HEK293T (cell line): ENCODE measurements at regions of chr20 and their contacts with region 1.

Region 1: GRCh38 chr20:37290158-37290810 is 829 bp downstream of the MANBAL start:
- DNase-seq: no peak

Region 2: GRCh38 chr20:36541227-36541763 is 749.0 kb before region 1 on chr20 and contains the start of gene MYL9:
- CTCF ChIA-PET with region 1: no interaction called
- POLR2A ChIA-PET with region 1: no interaction called
- DNase-seq: no peak

Region 3: DNA sequence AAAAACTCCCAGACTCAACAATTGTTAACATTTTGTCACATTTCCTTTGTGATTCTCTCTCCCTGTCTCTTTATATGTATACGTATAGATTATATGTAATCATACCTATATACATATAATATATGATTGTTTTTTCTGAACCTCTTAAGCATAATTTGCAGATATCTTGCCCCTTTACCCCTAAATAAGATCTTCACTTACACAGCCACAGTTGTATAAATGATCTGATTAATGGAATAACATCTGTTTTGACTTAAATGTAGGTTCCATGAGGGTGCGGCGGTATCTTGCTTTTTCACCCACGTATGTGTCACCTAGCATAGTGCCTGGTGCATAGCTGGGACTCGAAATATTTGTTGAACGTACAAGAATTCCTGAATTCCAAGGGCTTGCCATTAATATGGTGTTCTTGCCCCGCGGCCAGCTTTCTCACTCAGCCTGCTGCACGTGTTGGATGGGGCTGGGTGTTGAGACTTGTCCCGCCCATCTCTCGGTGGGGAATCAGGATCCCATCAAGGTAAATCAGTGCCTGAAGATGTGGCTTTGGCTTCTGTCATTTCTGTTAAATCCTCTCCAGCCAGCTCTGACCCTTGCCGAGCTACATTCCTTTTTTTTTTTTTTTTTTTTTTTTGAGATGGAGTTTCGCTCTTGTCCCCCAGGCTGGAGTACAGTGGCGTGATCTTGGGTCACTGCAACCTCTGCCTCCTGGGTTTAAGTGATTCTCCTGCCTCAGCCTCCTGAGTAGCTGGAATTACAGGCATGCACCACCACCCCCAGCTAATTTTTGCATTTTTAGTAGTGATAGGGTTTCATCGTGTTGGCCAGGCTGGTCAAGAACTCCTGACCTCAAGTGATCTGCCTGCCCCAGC is 11.1 kb before region 1 on chr20:
- CTCF ChIA-PET with region 1: interaction called, 3 read pairs
- POLR2A ChIA-PET with region 1: interaction called, 13 read pairs
- DNase-seq: no peak

Region 4: DNA sequence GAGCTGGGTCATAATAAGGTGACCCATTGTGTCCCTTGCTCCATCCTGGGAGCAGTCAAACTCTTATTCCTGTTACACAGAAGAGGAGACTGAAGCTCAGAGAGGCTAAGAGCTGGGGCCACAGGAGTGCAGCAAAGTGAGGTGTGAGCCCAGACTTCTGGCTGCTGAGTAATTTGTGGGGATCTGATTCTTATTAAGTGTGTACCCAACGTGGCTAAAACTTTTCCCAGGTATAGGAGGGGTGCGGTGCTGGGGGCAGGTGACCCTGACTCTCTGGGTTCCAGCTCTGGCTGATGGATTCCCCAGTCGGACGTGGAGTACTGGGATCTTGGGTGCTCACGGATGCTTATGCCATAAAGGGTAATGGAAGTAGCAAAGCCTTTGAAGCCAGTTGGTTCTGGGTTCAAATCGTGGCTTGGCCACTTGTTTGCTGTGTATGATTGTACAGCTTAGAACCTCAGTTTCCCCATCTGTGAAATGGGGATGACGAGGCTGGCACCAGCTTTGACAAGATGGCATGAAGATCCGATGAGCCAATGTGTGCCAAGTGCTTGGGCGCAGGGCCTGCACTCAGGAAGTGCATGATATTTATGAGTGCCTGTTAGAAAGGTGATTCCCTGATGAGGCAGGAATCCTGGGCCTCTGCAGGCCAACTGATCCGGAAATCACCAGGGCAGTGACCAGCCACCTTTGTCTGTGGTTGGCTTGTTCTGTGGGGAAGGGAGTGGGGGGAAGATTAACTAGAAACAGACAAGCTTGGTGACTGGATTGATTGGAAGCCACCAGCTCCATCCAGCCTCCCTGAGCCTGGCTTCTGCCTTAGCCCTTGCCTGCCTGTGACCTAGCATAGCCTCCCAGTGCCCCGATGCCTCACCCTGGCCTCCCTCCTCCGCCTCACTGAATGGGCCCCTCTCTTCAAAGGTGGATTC is 61.7 kb after region 1 on chr20:
- CTCF ChIA-PET with region 1: no interaction called
- POLR2A ChIA-PET with region 1: no interaction called
- DNase-seq: no peak